Dorsolateral prefrontal cortex (tissue), 120 donors: ENCODE measurements at regions of chr2 and their contacts with region 1.

Region 1: DNA sequence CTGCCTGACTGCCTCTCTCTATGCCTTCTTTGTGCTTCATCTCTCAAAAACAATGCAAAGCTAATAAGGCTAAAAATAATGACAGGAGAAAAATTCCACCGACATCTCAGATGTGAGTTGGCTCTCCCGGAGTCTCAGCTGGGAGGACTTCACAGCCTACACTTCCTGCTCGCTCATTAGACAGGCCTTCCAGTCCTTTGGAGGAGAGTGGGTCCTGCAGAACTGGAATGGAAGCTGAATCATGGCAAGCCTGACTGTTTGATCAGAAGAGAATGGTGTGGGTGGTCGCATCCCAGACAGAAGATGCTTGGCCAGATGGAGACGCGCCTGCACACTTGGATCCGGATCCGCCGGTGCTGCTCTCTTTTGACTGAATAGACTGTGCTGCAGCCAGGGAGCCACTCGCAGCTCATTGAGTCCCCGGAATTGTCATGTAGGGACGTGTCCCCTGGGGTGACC is 49.7 kb downstream of the TRIB2 start:
- DNase-seq: peak; percentile 4 to 80 (median 63)
- H3K4me3 ChIP-seq: no peak overlapping the region
- H3K27ac ChIP-seq: peak overlapping the region in 4 of 59 donors; percentile 14 to 46 (median 30)
- H3K27me3 ChIP-seq: peaks cover 0 to 9% (median 0%) of the 10 kb centered on the region in 45 donors
- CTCF ChIP-seq: no peak

Region 2: DNA sequence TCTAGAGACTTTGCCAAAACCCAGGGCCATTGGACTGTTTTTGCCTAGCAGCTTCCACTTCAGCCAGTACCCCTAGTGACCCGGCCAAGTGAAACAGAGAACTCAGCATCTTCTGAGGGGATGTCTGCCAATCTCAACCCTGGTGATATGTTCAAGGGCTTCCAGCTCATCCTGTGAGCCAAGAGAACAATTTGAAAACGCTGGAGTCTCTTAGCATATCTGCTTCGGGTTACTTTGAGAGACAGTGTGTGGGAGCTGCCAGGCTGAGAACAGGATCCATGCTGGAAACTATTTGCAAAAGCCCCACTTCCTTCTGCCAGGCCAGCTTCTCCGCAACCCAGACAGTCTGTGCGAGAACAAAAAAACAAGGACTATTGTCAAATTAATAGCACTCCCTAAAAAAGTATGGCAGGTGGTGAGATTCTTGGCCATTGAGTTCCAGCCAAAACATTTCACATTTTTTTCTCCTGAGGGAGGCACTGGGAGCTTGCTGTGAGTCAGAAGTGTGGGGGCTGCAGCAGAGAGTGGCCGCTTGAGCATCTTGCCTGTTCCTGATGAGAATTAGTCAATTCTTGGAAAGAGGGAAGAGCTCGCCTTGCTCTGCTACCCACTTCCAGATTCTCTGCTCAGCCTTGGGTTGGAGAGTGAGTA is 445.3 kb before region 1 on chr2:
- intact Hi-C with region 1: loop called in 1 of 2 experiments (anchors 2 kb)
- DNase-seq: peak in 8 of 10 donors; percentile 6 to 81 (median 64)
- H3K4me3 ChIP-seq: no peak overlapping the region
- H3K27ac ChIP-seq: peak overlapping the region in 13 of 59 donors; percentile 5 to 68 (median 37)
- H3K27me3 ChIP-seq: no peaks in the 10 kb centered on the region
- CTCF ChIP-seq: no peak

Region 3: DNA sequence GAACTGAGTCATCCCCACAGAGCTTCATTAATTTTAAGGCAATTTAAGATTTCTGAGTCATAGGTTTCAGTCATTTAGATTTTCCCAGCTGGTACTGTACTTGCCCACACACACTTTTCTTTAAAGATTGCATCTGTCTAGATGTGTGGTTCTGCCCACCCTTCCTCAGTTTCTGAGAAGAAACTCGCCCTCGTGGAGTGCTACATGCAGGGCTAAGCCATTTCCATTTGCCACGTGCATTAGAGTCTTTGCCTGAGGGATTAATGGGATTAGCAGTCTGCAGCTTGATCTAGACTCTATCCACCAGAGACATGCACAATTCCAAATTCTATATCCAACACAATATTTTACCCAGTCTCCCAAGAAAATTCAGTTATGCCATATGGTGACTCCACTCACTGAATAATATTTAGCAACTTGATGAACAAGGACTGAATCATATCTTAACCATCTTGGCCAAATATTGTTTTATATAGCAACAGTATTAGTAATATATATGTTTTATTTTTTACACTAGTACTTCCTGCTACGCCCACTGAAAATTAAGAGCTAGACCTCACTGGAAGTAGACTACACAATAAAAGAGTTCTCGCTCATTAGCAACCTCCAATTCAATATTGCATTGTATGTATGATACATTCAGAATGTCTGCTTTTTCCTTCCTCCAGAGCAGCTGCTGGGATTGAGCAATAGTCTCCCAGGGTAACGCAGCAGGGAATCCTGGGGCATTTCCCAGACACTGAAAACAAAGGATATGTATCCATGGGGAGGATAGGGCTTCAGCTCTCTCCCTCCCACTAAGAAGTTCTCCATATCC is 63.9 kb before region 1 on chr2:
- intact Hi-C with region 1: loop called in 1 of 2 experiments (anchors 2 kb)
- DNase-seq: no peak
- H3K4me3 ChIP-seq: no peak overlapping the region
- H3K27ac ChIP-seq: peak overlapping the region in 1 of 59 donors; percentile 38
- H3K27me3 ChIP-seq: no peaks in the 10 kb centered on the region
- CTCF ChIP-seq: no peak

Region 4: DNA sequence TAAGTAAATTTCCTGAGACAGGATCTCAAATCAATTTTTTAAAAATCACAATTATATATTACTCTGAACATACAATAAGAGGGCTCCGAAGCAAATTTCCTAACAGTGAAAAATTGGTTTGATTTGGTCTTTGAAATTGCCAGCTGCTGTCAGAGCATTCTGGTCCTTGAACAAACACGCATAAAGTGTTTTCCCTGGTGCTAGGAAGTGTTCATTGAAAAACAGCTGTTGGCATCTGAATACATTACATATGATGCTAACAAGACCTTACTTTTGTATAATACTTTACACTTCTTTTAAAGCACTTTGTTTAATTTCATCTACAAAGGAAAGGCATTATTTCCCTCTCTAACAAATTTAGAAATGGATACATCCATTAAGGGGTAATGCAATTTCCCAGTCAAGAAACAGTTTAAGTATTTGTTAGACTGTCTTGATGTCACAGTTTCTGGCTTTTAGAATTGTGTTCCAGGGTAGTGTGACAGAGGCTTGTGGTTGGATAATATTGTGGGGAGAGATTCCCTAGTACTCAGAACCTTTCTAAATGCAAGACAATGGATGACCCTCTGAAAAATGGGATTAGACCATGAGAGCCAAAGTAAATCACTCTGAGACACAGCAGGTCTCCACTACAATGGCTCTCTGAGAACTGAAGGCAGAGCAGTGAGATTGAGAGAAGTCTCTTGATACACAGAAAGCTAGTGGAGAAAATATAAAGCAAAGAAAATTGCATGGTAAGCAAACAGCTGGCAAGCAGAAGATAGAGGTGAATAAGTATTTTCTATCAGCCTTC is 249.3 kb after region 1 on chr2:
- intact Hi-C with region 1: no loop called
- DNase-seq: no peak
- H3K4me3 ChIP-seq: no peak overlapping the region
- H3K27ac ChIP-seq: no peak overlapping the region
- H3K27me3 ChIP-seq: peaks cover 0 to 30% (median 4%) of the 10 kb centered on the region in 45 donors
- CTCF ChIP-seq: no peak